GM12878 (cell line): ENCODE measurements at regions of chr17 and their contacts with region 1.

Region 1: GRCh38 chr17:7336240-7337175 is at the start of gene ACAP1:
- DNase-seq: no peak
- ATAC-seq: peak; percentile 93
- H3K4me3 ChIP-seq: peak within 1 kb of the TSS; percentile 96
- H3K27ac ChIP-seq: peak within 1 kb of the TSS; percentile 99
- H3K4me1 ChIP-seq: peaks cover 27% of the 10 kb centered on the region
- H3K27me3 ChIP-seq: no peaks in the 10 kb centered on the region
- CTCF ChIP-seq: 0 out of 6 replicates have a peak, but pooled peaks of 1 of the 3 experiments have one; percentile 11
- EP300 ChIP-seq: peak in 1 of 2 experiments; percentile 13; a peak in 1 of 4 replicates
- POLR2A ChIP-seq: peak; percentile 45
- RAD21 ChIP-seq: no peak
- polyA plus RNA-seq, gene ACAP1: 5.7 to 25.2 TPM

Region 2: DNA sequence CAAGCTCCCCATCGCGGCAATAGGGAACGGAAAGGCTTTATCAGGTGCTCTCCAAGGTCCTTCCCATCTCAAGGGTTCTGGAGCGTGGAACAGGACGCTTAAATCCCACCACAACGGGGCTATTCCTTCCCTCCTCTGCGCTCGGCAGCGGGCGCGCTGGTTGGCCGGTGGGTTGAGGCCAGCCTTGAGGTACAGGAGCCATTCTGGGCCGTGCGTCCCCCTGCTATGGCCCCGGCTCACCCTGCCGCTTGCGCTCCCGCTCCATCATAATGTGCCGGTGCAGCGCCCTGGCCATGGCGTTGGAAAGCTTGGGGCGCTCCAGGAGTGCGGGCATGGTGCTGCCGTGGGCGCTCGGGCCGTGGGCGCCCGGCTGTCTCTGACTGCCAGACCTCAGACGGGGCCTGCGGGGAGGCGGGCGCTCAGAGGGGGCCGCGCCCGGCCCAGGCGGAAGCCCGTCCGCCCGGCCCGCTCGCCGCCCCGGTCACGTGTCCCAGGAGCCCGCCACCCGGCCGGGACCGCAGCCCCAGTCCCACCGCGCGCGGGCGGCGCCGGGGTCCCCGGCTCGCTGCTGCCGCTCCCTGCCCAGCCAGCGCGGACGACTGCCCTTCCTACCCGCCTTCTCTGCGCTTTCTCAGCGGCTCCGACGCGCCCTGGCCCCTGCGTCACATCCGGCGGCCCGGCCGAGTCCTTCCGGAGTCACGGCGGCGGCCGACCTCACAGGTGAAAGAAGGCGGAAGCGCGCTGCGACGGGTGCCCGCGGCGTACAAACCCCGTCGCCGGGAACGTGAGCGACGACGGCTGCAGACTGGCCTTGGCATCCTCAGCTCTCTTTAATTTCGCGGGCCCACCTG is 21.6 kb before region 1 on chr17 and contains the start of gene GPS2:
- CTCF ChIA-PET with region 1: interaction called, 6 read pairs
- POLR2A ChIA-PET with region 1: interaction called, 13 read pairs
- RAD21 ChIA-PET with region 1: interaction called, 5 read pairs
- SMC1A ChIA-PET with region 1: interaction called, 5 read pairs
- in situ Hi-C with region 1: no loop called
- intact Hi-C with region 1: no loop called
- DNase-seq: no peak
- ATAC-seq: peak; percentile 81
- H3K4me3 ChIP-seq: peak within 1 kb of the TSS; percentile 84
- H3K27ac ChIP-seq: peak within 1 kb of the TSS; percentile 86
- H3K4me1 ChIP-seq: peaks cover 19% of the 10 kb centered on the region; the same call in 1 of the 2 replicates
- H3K27me3 ChIP-seq: no peaks in the 10 kb centered on the region
- CTCF ChIP-seq: no peak
- EP300 ChIP-seq: no peak
- POLR2A ChIP-seq: peak; percentile 94
- RAD21 ChIP-seq: no peak
- polyA plus RNA-seq, gene GPS2: 18.4 to 26.0 TPM

Region 3: GRCh38 chr17:7323731-7324437 is 12.6 kb before region 1 on chr17:
- CTCF ChIA-PET with region 1: interaction called, 49 read pairs
- POLR2A ChIA-PET with region 1: interaction called, 21 read pairs
- RAD21 ChIA-PET with region 1: interaction called, 13 read pairs
- SMC1A ChIA-PET with region 1: interaction called, 21 read pairs
- in situ Hi-C with region 1: no loop called
- intact Hi-C with region 1: no loop called
- DNase-seq: no peak
- ATAC-seq: peak; percentile 77
- H3K4me3 ChIP-seq: no peak overlapping the region
- H3K27ac ChIP-seq: no peak overlapping the region
- H3K4me1 ChIP-seq: peaks cover 5% of the 10 kb centered on the region
- H3K27me3 ChIP-seq: no peaks in the 10 kb centered on the region
- CTCF ChIP-seq: peak; percentile 88 to 99 (median 98)
- EP300 ChIP-seq: no peak
- POLR2A ChIP-seq: no peak
- RAD21 ChIP-seq: peak; percentile 70

Region 4: GRCh38 chr17:7351665-7352501 is 15.4 kb after region 1 on chr17 and contains the start of gene KCTD11:
- CTCF ChIA-PET with region 1: interaction called, 49 read pairs
- POLR2A ChIA-PET with region 1: interaction called, 52 read pairs
- RAD21 ChIA-PET with region 1: interaction called, 45 read pairs
- SMC1A ChIA-PET with region 1: interaction called, 33 read pairs
- in situ Hi-C with region 1: no loop called
- intact Hi-C with region 1: no loop called
- DNase-seq: no peak
- ATAC-seq: peak; percentile 81
- H3K4me3 ChIP-seq: peak within 1 kb of the TSS; percentile 88
- H3K27ac ChIP-seq: peak within 1 kb of the TSS; percentile 59
- H3K4me1 ChIP-seq: peaks cover 23% of the 10 kb centered on the region
- H3K27me3 ChIP-seq: no peaks in the 10 kb centered on the region
- CTCF ChIP-seq: peak in 2 of 3 experiments; percentile 55 to 59; a peak in 3 of 6 replicates
- EP300 ChIP-seq: no peak
- POLR2A ChIP-seq: peak; percentile 81
- RAD21 ChIP-seq: 0 out of 2 replicates have a peak, but pooled peaks have one; percentile 27
- polyA plus RNA-seq, gene KCTD11: 0.05 to 0.09 TPM

Region 5: GRCh38 chr17:7620835-7621234 is 284.3 kb after region 1 on chr17:
- CTCF ChIA-PET with region 1: no interaction called
- POLR2A ChIA-PET with region 1: no interaction called
- RAD21 ChIA-PET with region 1: no interaction called
- SMC1A ChIA-PET with region 1: no interaction called
- in situ Hi-C with region 1: no loop called
- intact Hi-C with region 1: no loop called
- DNase-seq: no peak
- ATAC-seq: no peak
- H3K4me3 ChIP-seq: no peak overlapping the region
- H3K27ac ChIP-seq: no peak overlapping the region
- H3K4me1 ChIP-seq: no peaks in the 10 kb centered on the region
- H3K27me3 ChIP-seq: no peaks in the 10 kb centered on the region
- CTCF ChIP-seq: no peak
- EP300 ChIP-seq: no peak
- POLR2A ChIP-seq: no peak
- RAD21 ChIP-seq: no peak